Breast epithelium (tissue), 4 donors: ENCODE measurements at regions of chr11 and their contacts with region 1.

Region 1: DNA sequence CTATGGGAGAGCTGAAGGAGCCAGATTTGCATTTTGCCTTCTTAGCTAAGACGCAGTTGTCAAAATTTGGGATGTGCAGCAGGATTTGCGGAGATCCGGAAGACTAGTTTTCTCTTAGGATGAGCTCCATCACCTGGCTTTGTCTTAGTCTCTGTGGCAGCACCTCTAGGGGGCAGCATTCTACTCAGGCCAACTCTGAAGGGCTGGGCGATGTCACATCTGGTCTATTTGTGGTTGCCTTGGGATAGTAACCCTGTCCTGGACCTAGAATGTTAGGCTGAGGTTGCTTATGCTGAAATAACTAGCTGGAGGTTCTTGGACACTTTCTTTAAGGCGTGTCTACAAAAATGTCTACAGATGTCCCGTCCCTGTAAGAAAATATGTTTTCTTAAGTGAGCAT is 116.2 kb downstream of the FAT3 start:
- DNase-seq: no peak
- H3K4me3 ChIP-seq: no peak overlapping the region
- H3K27ac ChIP-seq: no peak overlapping the region
- H3K4me1 ChIP-seq: no peaks in the 10 kb centered on the region
- H3K27me3 ChIP-seq: peaks cover 0 to 3% of the 10 kb centered on the region in 2 donors
- CTCF ChIP-seq: no peak
- POLR2A ChIP-seq: no peak

Region 2: DNA sequence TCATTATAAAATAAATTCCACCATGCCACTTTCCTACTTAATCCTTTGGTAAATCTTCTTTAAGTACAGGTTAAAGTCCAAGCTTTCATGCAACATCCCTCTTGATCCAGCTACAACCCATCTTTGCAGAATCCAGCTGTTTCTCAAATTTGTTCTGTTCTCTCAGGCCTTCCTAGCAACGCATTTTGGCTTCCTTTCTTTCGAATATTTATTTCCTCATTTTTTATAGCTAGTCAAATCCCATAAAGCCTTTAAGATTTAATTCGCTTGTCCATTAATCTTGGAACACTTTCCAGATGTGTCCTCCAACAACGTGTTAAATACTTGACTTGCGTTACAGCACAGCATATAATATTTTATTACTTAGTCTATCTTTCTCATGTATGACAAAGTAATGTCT is 1517.8 kb before region 1 on chr11:
- intact Hi-C with region 1: loop called (anchors 5 kb)
- DNase-seq: no peak
- H3K4me3 ChIP-seq: no peak overlapping the region
- H3K27ac ChIP-seq: no peak overlapping the region
- H3K4me1 ChIP-seq: no peaks in the 10 kb centered on the region
- H3K27me3 ChIP-seq: no peaks in the 10 kb centered on the region
- CTCF ChIP-seq: no peak
- POLR2A ChIP-seq: no peak

Region 3: GRCh38 chr11:92830377-92831155 is 489.7 kb after region 1 on chr11:
- intact Hi-C with region 1: no loop called
- DNase-seq: no peak
- H3K4me3 ChIP-seq: no peak overlapping the region
- H3K27ac ChIP-seq: no peak overlapping the region
- H3K4me1 ChIP-seq: no peaks in the 10 kb centered on the region
- H3K27me3 ChIP-seq: no peaks in the 10 kb centered on the region
- CTCF ChIP-seq: no peak
- POLR2A ChIP-seq: no peak